Naive thymus-derived CD4-positive, alpha-beta T cell (primary cell): ENCODE measurements at regions of chrX and their contacts with region 1.

Region 1: DNA sequence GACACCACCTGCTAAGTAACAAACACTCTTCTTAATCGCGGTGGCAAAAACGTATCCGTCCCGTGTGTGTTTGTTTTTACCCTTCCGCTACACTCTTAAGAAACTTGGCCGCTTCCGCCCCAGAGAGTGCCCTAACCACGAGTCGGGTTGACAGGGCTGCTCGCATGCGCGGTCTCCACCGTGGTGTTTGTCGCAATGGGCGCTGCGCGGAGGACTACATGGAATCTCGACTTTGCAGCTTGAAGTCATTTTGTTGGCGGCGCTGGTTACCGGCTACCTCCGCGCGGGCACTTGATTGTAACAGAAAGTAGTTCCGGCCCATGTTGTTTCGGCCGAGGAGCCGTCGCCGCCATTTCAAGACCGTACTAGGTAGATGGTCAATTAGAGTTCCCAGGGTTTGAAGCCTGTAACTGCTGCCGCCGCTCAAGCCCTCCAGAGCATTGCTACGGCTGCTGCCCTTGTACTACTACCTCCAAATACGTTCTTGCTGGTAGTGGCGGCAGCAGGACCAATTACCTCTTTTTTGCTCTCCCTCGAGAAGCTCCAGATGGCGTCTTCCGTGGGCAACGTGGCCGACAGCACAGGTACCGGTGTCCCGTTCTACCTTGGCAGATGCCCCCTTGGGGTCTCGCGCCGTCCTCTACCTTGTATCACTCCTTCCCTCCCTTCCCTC is at the start of gene OGT:
- DNase-seq: peak; percentile 77 to 95 (median 92)
- ATAC-seq: peak; percentile 91
- H3K4me3 ChIP-seq: peak within 1 kb of the TSS; percentile 96
- H3K4me3 Mint-ChIP-seq: peak within 1 kb of the TSS; percentile 76 to 100 (median 98)
- H3K27ac ChIP-seq: peak within 1 kb of the TSS; percentile 91
- H3K27ac Mint-ChIP-seq: peak within 1 kb of the TSS; percentile 92 to 99 (median 99)
- H3K4me1 ChIP-seq: peaks cover 12 to 16% of the 10 kb centered on the region in 2 donors
- H3K4me1 Mint-ChIP-seq: peaks cover 4 to 35% (median 31%) of the 10 kb centered on the region in 7 donors
- H3K27me3 ChIP-seq: no peaks in the 10 kb centered on the region
- H3K27me3 Mint-ChIP-seq: no peaks in the 10 kb centered on the region
- total RNA-seq, gene OGT: 313 to 520 (median 424) TPM

Region 2: GRCh38 chrX:71111141-71111843 is 421.6 kb before region 1 on chrX and contains the start of gene IL2RG:
- CTCF ChIA-PET with region 1: no interaction called
- POLR2A ChIA-PET with region 1: interaction called, 9 read pairs
- intact Hi-C with region 1: loop called (anchors 5 to 10 kb)
- DNase-seq: peak; percentile 37 to 92 (median 87)
- ATAC-seq: peak; percentile 95
- H3K4me3 ChIP-seq: peak within 1 kb of the TSS; percentile 80
- H3K4me3 Mint-ChIP-seq: peak within 1 kb of the TSS; percentile 93 to 98 (median 98)
- H3K27ac ChIP-seq: peak within 1 kb of the TSS; percentile 96
- H3K27ac Mint-ChIP-seq: peak within 1 kb of the TSS; percentile 96 to 100 (median 98)
- H3K4me1 ChIP-seq: peaks cover 28 to 39% of the 10 kb centered on the region in 2 donors
- H3K4me1 Mint-ChIP-seq: peaks cover 24 to 69% (median 43%) of the 10 kb centered on the region in 7 donors
- H3K27me3 ChIP-seq: no peaks in the 10 kb centered on the region
- H3K27me3 Mint-ChIP-seq: no peaks in the 10 kb centered on the region
- total RNA-seq, gene IL2RG: 228 to 671 (median 329) TPM

Region 3: GRCh38 chrX:71283403-71284143 is 249.3 kb before region 1 on chrX and contains the start of gene NONO:
- CTCF ChIA-PET with region 1: interaction called, 3 read pairs
- POLR2A ChIA-PET with region 1: interaction called, 8 read pairs
- intact Hi-C with region 1: loop called (anchors 1 to 2 kb)
- DNase-seq: peak; percentile 48 to 96 (median 89)
- ATAC-seq: peak; percentile 91
- H3K4me3 ChIP-seq: peak within 1 kb of the TSS; percentile 88
- H3K4me3 Mint-ChIP-seq: peak within 1 kb of the TSS; percentile 94 to 99 (median 98)
- H3K27ac ChIP-seq: peak within 1 kb of the TSS; percentile 93
- H3K27ac Mint-ChIP-seq: peak within 1 kb of the TSS; percentile 97 to 100 (median 99)
- H3K4me1 ChIP-seq: peaks cover 0 to 8% of the 10 kb centered on the region in 2 donors
- H3K4me1 Mint-ChIP-seq: peaks cover under 1 to 28% (median 17%) of the 10 kb centered on the region in 7 donors
- H3K27me3 ChIP-seq: no peaks in the 10 kb centered on the region
- H3K27me3 Mint-ChIP-seq: peaks cover 0 to 3% (median 0%) of the 10 kb centered on the region in 5 donors
- total RNA-seq, gene NONO: 334 to 488 (median 371) TPM

Region 4: DNA sequence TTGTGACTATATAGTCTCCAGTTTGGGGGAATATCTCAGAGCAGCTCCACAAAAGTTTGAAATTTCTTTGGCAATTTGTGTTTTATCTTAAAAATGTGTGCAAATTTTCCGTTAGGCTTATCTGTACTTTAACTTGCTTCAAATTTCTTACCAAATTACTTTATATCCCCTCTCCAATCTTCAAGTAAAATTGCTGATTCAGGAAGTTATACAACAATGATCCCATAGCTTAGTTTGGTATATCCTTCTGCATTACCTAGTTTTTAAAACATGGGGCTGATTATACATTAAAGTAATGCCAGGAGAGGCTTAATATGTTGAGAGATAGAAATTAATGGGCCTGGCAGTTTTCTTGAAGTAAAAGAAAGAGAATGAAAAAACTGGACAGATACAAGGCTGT is 100.2 kb before region 1 on chrX:
- CTCF ChIA-PET with region 1: no interaction called
- POLR2A ChIA-PET with region 1: no interaction called
- intact Hi-C with region 1: no loop called
- DNase-seq: no peak
- ATAC-seq: no peak
- H3K4me3 ChIP-seq: no peak overlapping the region
- H3K4me3 Mint-ChIP-seq: no peak overlapping the region
- H3K27ac ChIP-seq: no peak overlapping the region
- H3K27ac Mint-ChIP-seq: peak overlapping the region in 1 of 9 donors; percentile 56
- H3K4me1 ChIP-seq: no peaks in the 10 kb centered on the region
- H3K4me1 Mint-ChIP-seq: peaks cover 0 to 8% (median 2%) of the 10 kb centered on the region in 7 donors
- H3K27me3 ChIP-seq: no peaks in the 10 kb centered on the region
- H3K27me3 Mint-ChIP-seq: no peaks in the 10 kb centered on the region

Region 5: GRCh38 chrX:71492231-71493065 is 40.4 kb before region 1 on chrX:
- CTCF ChIA-PET with region 1: interaction called, 3 read pairs
- POLR2A ChIA-PET with region 1: interaction called, 54 read pairs
- intact Hi-C with region 1: loop called (anchors 1 kb)
- DNase-seq: peak; percentile 16 to 53 (median 43)
- ATAC-seq: peak; percentile 86
- H3K4me3 ChIP-seq: peak overlapping the region; percentile 68
- H3K4me3 Mint-ChIP-seq: peak overlapping the region; percentile 79 to 88 (median 84)
- H3K27ac ChIP-seq: peak overlapping the region; percentile 55
- H3K27ac Mint-ChIP-seq: peak overlapping the region in 8 of 9 donors; percentile 43 to 81 (median 56)
- H3K4me1 ChIP-seq: no peaks in the 10 kb centered on the region
- H3K4me1 Mint-ChIP-seq: peaks cover 4 to 17% (median 11%) of the 10 kb centered on the region in 7 donors
- H3K27me3 ChIP-seq: no peaks in the 10 kb centered on the region
- H3K27me3 Mint-ChIP-seq: peaks cover 0 to 2% (median 0%) of the 10 kb centered on the region in 5 donors

Region 6: GRCh38 chrX:71573591-71573990 is 40.7 kb after region 1 on chrX:
- CTCF ChIA-PET with region 1: no interaction called
- POLR2A ChIA-PET with region 1: interaction called, 3 read pairs
- intact Hi-C with region 1: loop called in 1 of 2 experiments (anchors 5 kb)
- DNase-seq: no peak
- ATAC-seq: no peak
- H3K4me3 ChIP-seq: no peak overlapping the region
- H3K4me3 Mint-ChIP-seq: no peak overlapping the region
- H3K27ac ChIP-seq: no peak overlapping the region
- H3K27ac Mint-ChIP-seq: peak overlapping the region in 1 of 9 donors; percentile 43
- H3K4me1 ChIP-seq: no peaks in the 10 kb centered on the region
- H3K4me1 Mint-ChIP-seq: peaks cover 0 to 7% (median 0%) of the 10 kb centered on the region in 7 donors
- H3K27me3 ChIP-seq: no peaks in the 10 kb centered on the region
- H3K27me3 Mint-ChIP-seq: no peaks in the 10 kb centered on the region